Mammary epithelial cell (primary cell): ENCODE measurements at regions of chr7 and their contacts with region 1.

Region 1: DNA sequence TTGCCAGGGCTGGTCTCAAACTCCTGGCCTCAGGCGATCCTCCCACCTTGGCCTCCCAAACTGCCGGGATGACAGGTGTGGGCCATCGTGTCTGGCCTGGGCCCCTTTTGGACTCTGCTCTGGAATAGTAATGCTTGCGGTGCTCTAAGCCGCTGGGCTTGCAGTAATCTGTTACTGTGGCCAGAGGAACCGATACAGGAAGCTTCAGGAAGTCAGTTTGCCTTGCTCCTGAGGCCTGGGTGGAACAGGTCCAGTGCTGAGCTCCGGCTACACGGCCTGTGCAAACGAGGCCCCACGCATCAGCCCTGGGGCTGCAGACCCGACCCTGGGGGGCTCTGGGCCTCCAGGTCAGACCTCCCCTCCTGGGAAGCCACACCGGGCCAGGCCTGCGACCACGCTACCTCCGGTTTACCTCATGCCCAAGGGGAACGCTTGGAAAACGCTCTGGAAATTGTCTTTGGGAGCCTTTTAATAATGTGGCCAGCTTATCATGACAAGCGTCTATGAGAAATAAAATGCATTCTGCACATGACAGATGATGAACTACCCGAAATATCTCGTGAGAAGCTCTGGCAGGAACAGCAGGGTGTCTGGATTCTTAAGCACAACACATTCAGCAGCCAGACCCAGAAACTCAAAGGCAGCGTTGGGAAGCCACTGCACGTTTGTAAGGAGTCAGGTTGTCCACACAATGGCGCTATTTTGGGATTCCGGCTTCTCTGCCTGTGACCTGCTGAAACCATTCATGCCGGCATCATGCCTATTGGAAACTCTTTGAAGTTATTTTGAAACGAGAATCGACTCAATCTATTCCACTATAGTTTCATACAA is 10.1 kb upstream of the ADAP1 start:
- DNase-seq: no peak
- H3K4me3 ChIP-seq: no peak overlapping the region
- H3K27ac ChIP-seq: no peak overlapping the region
- H3K4me1 ChIP-seq: no peaks in the 10 kb centered on the region
- H3K27me3 ChIP-seq: no peaks in the 10 kb centered on the region
- CTCF ChIP-seq: peak; percentile 4 to 17

Region 2: DNA sequence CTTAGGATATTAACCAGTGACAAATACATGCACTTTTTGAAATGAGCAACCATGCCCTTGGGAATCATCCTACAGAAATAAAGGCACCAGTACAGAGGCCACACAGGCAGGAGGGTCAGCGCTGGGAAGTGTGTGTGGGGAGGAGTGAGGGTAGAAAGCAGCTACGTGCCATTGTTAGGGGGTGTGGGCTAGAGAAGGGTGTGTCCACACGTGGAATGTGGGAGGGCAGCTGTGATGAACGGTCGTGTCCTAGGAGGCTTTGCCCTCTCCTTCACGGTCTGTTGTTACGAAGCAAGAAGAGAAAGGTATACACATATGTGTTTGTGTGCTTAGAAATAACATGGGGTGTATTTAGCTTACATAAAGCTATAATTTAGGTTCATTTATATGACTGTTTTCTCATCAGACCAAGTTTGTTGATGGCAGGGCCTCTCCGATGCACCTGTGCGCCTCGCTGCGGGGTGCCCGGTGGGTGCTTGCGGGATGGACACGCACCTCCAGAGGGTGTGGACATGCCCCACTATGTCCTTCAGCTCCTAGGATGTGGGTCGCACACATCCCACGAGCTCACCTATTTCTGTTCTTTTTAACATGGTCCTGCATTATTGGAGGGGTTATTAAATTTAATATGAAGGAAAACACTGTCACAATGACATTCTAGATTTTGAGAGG is 105.1 kb before region 1 on chr7:
- CTCF ChIA-PET with region 1: no interaction called
- dilution Hi-C with region 1: loop called (anchors 5 kb)
- in situ Hi-C with region 1: no loop called
- intact Hi-C with region 1: no loop called
- DNase-seq: no peak
- H3K4me3 ChIP-seq: no peak overlapping the region
- H3K27ac ChIP-seq: no peak overlapping the region
- H3K4me1 ChIP-seq: no peaks in the 10 kb centered on the region
- H3K27me3 ChIP-seq: no peaks in the 10 kb centered on the region
- CTCF ChIP-seq: no peak

Region 3: DNA sequence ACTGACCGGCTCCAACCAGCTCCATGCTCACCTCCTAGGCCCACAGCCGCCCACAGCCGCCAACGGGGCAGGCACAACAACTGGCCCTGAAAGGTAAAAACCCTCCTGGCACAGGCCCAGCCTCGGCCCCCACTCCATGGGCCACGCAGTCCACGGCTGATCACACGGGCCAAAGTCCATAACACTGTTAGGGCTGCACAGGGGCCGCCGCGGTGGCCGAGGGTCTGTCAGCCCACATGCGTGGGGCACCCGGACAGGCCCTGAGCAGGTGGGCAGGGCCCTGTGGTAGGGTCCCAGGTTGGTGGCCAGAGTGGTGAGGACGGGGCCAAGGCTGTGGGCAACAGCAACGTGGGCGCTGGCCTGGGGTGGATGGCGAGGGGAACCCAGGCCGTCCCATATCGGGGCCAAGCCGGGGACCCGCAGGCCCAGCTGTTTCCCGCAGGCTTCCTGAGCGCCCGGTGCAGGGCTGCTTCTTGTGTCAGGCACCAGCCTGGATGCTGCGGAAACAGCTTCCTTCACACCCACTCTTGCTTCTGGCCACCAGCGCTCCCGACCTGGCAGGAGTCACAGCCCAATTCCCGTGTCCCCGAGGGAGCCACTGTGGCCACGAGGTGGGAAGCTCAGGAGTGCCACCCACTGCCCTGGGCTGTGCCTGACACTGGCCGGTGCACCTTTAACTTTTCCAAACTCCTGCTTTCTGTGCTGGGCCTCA is 47.5 kb after region 1 on chr7:
- CTCF ChIA-PET with region 1: no interaction called
- dilution Hi-C with region 1: loop called (anchors 5 kb)
- in situ Hi-C with region 1: no loop called
- intact Hi-C with region 1: no loop called
- DNase-seq: no peak
- H3K4me3 ChIP-seq: no peak overlapping the region
- H3K27ac ChIP-seq: no peak overlapping the region
- H3K4me1 ChIP-seq: peaks cover 13% of the 10 kb centered on the region
- H3K27me3 ChIP-seq: no peaks in the 10 kb centered on the region
- CTCF ChIP-seq: no peak

Region 4: GRCh38 chr7:1169409-1170368 is 205.1 kb after region 1 on chr7:
- CTCF ChIA-PET with region 1: no interaction called
- dilution Hi-C with region 1: loop called (anchors 5 kb)
- in situ Hi-C with region 1: no loop called
- intact Hi-C with region 1: no loop called
- DNase-seq: peak; percentile 57
- H3K4me3 ChIP-seq: peak overlapping the region; percentile 24 to 65 (median 43)
- H3K27ac ChIP-seq: peak overlapping the region; percentile 21
- H3K4me1 ChIP-seq: no peaks in the 10 kb centered on the region
- H3K27me3 ChIP-seq: no peaks in the 10 kb centered on the region
- CTCF ChIP-seq: peak; percentile 77 to 83